ENCODE measurements at regions of chr20 and their contacts with region 1.

Region 1: GRCh38 chr20:58864350-58864749 is 11.8 kb downstream of the GNAS start:
- DNase-seq: peak; percentile 46
- H3K4me3 ChIP-seq: no peak overlapping the region
- H3K27ac ChIP-seq: no peak overlapping the region
- H3K4me1 ChIP-seq: no peaks in the 10 kb centered on the region
- CTCF ChIP-seq: peak; percentile 76

Region 2: DNA sequence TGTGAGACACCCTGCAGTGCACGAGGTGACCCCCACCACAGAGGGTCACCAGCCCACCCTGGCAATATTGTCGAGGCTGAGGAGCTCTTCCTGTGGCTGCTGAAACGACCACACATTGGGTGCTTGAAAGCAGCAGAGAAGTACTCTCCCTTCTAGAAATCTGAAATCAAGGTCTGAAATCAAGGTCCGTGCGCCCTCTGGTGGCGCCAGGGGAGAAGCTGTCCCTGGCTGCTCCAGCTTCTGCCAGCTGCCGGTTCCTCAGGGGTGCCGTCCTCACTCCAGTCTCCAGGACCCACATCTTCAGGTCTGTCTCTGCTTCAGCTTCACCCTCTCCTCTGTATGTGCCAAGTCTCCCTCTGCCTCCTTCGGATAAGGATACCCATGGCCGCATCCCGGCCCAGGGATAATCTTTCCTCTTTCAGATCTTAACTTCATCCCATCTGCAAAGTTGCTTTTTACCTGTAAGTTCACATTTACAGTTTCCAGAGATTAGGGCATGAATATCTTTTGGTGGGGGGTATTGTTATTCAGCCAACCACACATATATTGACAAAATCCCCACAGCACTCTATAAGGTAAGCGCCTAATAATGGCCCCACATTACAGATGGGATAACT is 631.7 kb after region 1 on chr20:
- CTCF ChIA-PET with region 1: no interaction called
- POLR2A ChIA-PET with region 1: no interaction called
- intact Hi-C with region 1: loop called (anchors 1 kb)
- DNase-seq: peak; percentile 65
- H3K4me3 ChIP-seq: no peak overlapping the region
- H3K27ac ChIP-seq: no peak overlapping the region
- H3K4me1 ChIP-seq: no peaks in the 10 kb centered on the region
- CTCF ChIP-seq: peak; percentile 88

Measured in OCI-LY7 (cell line).